ENCODE measurements at regions of chr17 and their contacts with region 1.

Region 1: DNA sequence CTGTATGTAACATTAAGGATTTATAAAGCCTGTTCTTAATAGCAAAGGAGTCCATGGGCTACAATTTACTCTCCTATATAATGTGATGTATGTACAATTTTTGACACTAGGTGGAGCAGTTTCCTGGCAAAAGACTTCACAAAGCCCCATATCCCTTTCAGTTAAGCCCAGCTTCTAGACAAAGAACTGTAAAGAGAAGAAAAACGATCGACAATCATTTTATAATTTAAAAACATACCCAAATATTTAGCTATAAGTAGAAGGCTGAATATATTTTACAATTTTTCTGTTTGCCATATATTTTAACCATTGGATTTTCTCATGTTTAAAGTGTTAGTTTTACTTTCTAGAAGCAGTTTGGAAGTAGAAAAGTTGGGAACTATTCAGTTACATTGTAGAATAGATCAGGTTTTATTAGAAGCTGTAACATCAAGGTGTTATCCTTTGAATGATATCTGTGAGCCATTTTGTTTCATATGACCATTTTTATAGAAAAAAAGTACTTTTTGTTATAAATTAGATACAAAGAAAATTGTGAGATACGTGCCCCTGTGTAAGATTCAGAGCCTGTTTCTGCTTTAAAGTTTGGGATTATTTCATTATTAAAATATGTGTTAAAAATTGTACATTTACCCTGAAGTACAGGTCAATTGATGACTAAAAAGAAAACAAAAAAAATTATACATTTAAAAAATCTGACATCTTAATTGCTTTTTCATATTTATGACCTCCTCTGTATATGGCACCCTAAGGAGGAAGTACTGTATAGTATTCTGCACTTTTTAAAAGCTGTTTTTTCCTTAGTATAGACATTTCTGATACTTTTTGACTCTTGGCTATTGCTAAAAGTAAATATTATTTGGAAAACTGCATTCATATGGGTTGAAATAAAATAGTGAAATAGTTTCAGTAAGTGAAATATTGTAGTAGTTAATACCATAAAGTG is 46.3 kb downstream of the VMP1 start:
- DNase-seq: no peak
- H3K4me3 Mint-ChIP-seq: peak overlapping the region; percentile 62
- H3K27ac Mint-ChIP-seq: peak overlapping the region; percentile 97
- H3K4me1 Mint-ChIP-seq: peaks cover 71% of the 10 kb centered on the region
- H3K27me3 Mint-ChIP-seq: no peaks in the 10 kb centered on the region

Region 2: DNA sequence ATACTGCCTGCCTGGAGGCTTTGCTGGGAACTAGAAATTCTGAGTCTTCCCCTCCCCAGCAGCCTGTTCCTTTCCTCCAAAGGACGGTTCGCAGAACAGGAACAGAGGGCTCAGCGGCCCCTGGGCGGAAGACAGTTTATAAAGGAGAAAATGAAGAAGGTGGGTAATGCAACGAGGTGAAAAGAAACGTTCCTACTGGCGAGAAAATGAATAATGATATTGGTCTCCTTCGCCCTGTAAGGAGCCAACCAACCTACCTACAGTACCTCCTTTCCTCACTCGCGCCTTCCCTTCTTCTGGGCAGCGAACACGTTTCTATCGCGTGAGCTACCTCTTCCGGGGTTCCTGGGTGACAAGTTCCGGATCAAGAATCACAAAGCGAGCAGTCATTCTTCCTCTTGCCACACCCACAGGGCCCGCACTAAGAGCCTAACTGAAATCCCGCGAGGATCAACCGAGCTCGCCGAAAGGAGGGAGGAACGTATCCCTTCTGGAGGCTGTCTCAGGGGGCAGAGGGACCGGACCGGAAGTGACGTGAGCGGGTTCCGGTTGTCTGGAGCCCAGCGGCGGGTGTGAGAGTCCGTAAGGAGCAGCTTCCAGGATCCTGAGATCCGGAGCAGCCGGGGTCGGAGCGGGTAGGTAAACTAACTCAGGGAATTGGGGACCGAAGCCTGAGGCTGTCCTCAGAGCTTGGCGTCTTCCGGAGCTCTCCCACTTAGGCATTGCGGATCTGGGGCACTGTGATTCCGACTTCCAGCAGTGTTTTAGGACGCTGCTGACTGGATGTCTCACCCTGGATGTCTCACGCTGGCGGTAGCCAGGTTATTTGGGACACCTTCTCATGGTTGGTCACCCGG is 46.5 kb before region 1 on chr17 and contains the starts of genes PTRH2 and VMP1:
- CTCF ChIA-PET with region 1: interaction called, 8 read pairs
- POLR2A ChIA-PET with region 1: interaction called, 10 read pairs
- intact Hi-C with region 1: loop called (anchors 2 kb)
- DNase-seq: peak; percentile 97
- H3K4me3 Mint-ChIP-seq: peak within 1 kb of the TSS; percentile 96
- H3K27ac Mint-ChIP-seq: peak within 1 kb of the TSS; percentile 93
- H3K4me1 Mint-ChIP-seq: peaks cover 58% of the 10 kb centered on the region
- H3K27me3 Mint-ChIP-seq: no peaks in the 10 kb centered on the region
- total RNA-seq, gene PTRH2: 35.9 TPM
- total RNA-seq, gene VMP1: 517 to 553 TPM

Region 3: GRCh38 chr17:59778996-59779395 is 25.2 kb after region 1 on chr17:
- CTCF ChIA-PET with region 1: interaction called, 22 read pairs
- POLR2A ChIA-PET with region 1: interaction called, 254 read pairs
- intact Hi-C with region 1: loop called (anchors 1 kb)
- DNase-seq: no peak
- H3K4me3 Mint-ChIP-seq: peak overlapping the region; percentile 2
- H3K27ac Mint-ChIP-seq: peak overlapping the region; percentile 88
- H3K4me1 Mint-ChIP-seq: peaks cover 58% of the 10 kb centered on the region
- H3K27me3 Mint-ChIP-seq: no peaks in the 10 kb centered on the region

Region 4: GRCh38 chr17:59800530-59800942 is 46.7 kb after region 1 on chr17:
- CTCF ChIA-PET with region 1: interaction called, 4 read pairs
- POLR2A ChIA-PET with region 1: interaction called, 31 read pairs
- intact Hi-C with region 1: no loop called
- DNase-seq: no peak
- H3K4me3 Mint-ChIP-seq: no peak overlapping the region
- H3K27ac Mint-ChIP-seq: peak overlapping the region; percentile 28
- H3K4me1 Mint-ChIP-seq: peaks cover 30% of the 10 kb centered on the region
- H3K27me3 Mint-ChIP-seq: no peaks in the 10 kb centered on the region

Region 5: GRCh38 chr17:59837308-59838051 is 83.7 kb after region 1 on chr17:
- CTCF ChIA-PET with region 1: interaction called, 64 read pairs
- POLR2A ChIA-PET with region 1: interaction called, 365 read pairs
- intact Hi-C with region 1: loop called (anchors 1 kb)
- DNase-seq: peak; percentile 75
- H3K4me3 Mint-ChIP-seq: peak overlapping the region; percentile 98
- H3K27ac Mint-ChIP-seq: peak overlapping the region; percentile 100
- H3K4me1 Mint-ChIP-seq: peaks cover 50% of the 10 kb centered on the region
- H3K27me3 Mint-ChIP-seq: peaks cover 26% of the 10 kb centered on the region

Region 6: GRCh38 chr17:59853168-59853918 is 99.5 kb after region 1 on chr17:
- CTCF ChIA-PET with region 1: interaction called, 58 read pairs
- POLR2A ChIA-PET with region 1: interaction called, 55 read pairs
- intact Hi-C with region 1: loop called (anchors 1 kb)
- DNase-seq: peak; percentile 84
- H3K4me3 Mint-ChIP-seq: peak overlapping the region; percentile 12
- H3K27ac Mint-ChIP-seq: peak overlapping the region; percentile 84
- H3K4me1 Mint-ChIP-seq: peaks cover 48% of the 10 kb centered on the region
- H3K27me3 Mint-ChIP-seq: no peaks in the 10 kb centered on the region

Region 7: DNA sequence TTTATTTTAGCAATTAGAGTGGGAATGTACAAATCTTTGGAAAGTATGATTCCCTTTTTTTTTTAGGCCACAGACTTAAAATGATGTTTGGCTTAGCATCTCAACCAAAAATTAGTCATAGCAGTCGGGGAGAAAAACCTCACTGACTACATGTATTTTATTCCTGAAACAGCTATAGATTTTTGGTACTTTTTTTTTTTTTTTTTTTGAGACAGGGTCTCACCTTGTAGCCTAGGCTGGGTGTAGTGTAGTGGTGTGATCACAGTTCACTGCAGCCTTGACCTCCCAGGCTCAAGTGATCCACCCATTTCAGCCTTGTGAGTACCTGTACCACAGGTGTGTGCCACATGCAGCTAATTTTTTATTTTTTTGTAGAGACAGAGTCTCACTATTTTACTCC is 187.3 kb after region 1 on chr17:
- CTCF ChIA-PET with region 1: no interaction called
- POLR2A ChIA-PET with region 1: no interaction called
- intact Hi-C with region 1: loop called (anchors 5 kb)
- DNase-seq: peak; percentile 20
- H3K4me3 Mint-ChIP-seq: no peak overlapping the region
- H3K27ac Mint-ChIP-seq: peak overlapping the region; percentile 91
- H3K4me1 Mint-ChIP-seq: peaks cover 40% of the 10 kb centered on the region
- H3K27me3 Mint-ChIP-seq: no peaks in the 10 kb centered on the region